B cell (primary cell): ENCODE measurements at regions of chr12 and their contacts with region 1.

Region 1: GRCh38 chr12:96303653-96304052 is 96.6 kb downstream of the CDK17 start:
- DNase-seq: no peak
- ATAC-seq: no peak
- H3K4me3 ChIP-seq: no peak overlapping the region
- H3K4me3 Mint-ChIP-seq: no peak overlapping the region
- H3K27ac ChIP-seq: no peak overlapping the region
- H3K27ac Mint-ChIP-seq: no peak overlapping the region
- H3K4me1 ChIP-seq: no peaks in the 10 kb centered on the region
- H3K4me1 Mint-ChIP-seq: peaks cover 2% of the 10 kb centered on the region
- H3K27me3 ChIP-seq: no peaks in the 10 kb centered on the region
- H3K27me3 Mint-ChIP-seq: no peaks in the 10 kb centered on the region
- CTCF ChIP-seq: no peak

Region 2: DNA sequence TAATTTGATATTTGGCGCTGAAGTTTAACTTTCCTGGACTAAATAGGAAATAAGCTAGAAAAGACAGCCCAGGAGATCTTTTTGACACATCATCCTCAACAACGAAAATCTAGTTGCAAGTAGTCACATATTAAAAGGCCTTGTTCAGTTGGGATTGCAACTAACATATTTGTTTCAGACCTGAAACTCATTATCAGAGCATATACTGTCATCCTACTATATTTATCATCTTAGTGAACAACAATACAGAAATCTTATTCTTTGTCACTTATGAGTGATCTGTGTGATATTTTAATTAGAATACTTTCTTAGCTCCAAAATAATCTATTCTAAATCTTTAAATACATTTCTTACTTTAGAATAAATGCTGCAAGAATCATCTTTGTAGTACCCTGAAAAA is 37.4 kb before region 1 on chr12:
- CTCF ChIA-PET with region 1: no interaction called
- POLR2A ChIA-PET with region 1: no interaction called
- intact Hi-C with region 1: loop called (anchors 5 kb)
- DNase-seq: no peak
- ATAC-seq: no peak
- H3K4me3 ChIP-seq: no peak overlapping the region
- H3K4me3 Mint-ChIP-seq: no peak overlapping the region
- H3K27ac ChIP-seq: no peak overlapping the region
- H3K27ac Mint-ChIP-seq: no peak overlapping the region
- H3K4me1 ChIP-seq: no peaks in the 10 kb centered on the region
- H3K4me1 Mint-ChIP-seq: peaks cover 6% of the 10 kb centered on the region
- H3K27me3 ChIP-seq: no peaks in the 10 kb centered on the region
- H3K27me3 Mint-ChIP-seq: no peaks in the 10 kb centered on the region
- CTCF ChIP-seq: no peak